CD14-positive monocyte (primary cell): ENCODE measurements at regions of chr2 and their contacts with region 1.

Region 1: GRCh38 chr2:64653349-64654062 is at the start of gene SERTAD2:
- DNase-seq: peak; percentile 84 to 89 (median 86)
- H3K4me3 ChIP-seq: peak within 1 kb of the TSS; percentile 87 to 99 (median 95)
- H3K4me3 Mint-ChIP-seq: peak within 1 kb of the TSS; percentile 89 to 93
- H3K27ac ChIP-seq: peak within 1 kb of the TSS; percentile 97 to 98
- H3K27ac Mint-ChIP-seq: peak within 1 kb of the TSS; percentile 96 to 99 (median 97)
- H3K4me1 ChIP-seq: peaks cover 52 to 74% of the 10 kb centered on the region in 2 donors
- H3K4me1 Mint-ChIP-seq: peaks cover 68% of the 10 kb centered on the region
- H3K27me3 ChIP-seq: no peaks in the 10 kb centered on the region
- H3K27me3 Mint-ChIP-seq: peaks cover 0 to 1% (median 0%) of the 10 kb centered on the region in 3 donors
- CTCF ChIP-seq: no peak
- polyA plus RNA-seq, gene SERTAD2: 8.5 to 68.7 (median 8.8) TPM

Region 2: GRCh38 chr2:64698668-64699444 is 45.4 kb after region 1 on chr2:
- intact Hi-C with region 1: loop called (anchors 5 kb)
- DNase-seq: peak; percentile 23 to 78 (median 59)
- H3K4me3 ChIP-seq: no peak overlapping the region
- H3K4me3 Mint-ChIP-seq: no peak overlapping the region
- H3K27ac ChIP-seq: peak overlapping the region in 1 of 2 donors; percentile 86
- H3K27ac Mint-ChIP-seq: peak overlapping the region; percentile 10 to 98 (median 80)
- H3K4me1 ChIP-seq: peaks cover 38 to 40% of the 10 kb centered on the region in 2 donors
- H3K4me1 Mint-ChIP-seq: peaks cover 50% of the 10 kb centered on the region
- H3K27me3 ChIP-seq: no peaks in the 10 kb centered on the region
- H3K27me3 Mint-ChIP-seq: no peaks in the 10 kb centered on the region
- CTCF ChIP-seq: no peak

Region 3: DNA sequence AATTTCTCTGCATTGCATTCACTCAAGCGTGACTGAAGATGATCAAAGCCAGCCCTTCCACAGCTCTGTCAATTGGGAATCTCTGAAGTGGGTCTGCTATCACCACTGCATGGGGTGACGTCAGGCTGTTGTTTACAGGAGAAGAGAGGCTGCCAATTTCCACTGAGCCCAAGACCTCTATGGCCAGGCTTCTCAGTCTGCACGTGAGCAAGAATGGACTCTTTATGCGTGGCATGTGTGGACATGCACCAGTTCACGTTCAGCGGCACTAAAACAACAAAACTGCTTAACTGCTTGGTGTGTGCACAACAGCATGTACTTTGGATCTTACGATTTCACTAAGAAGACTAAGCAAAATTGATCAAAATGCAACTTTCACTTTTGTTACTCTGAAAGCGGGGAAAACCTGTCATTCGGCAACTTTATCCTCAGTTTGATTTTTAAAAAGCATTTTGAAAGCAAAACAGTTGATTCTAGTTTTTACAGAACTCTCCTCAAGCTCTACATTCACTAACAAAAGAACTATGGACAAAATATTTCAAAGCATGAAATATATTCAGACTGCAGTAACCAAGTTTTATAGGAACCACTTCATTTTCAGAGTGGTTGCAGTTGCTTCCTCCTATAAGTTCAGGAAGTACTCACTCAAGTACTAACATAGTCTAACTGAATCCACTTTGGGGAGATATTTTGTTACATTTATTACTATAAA is 77.2 kb after region 1 on chr2:
- intact Hi-C with region 1: loop called in 1 of 2 experiments (anchors 5 kb)
- DNase-seq: peak; percentile 40 to 65 (median 64)
- H3K4me3 ChIP-seq: peak overlapping the region; percentile 43 to 99 (median 84)
- H3K4me3 Mint-ChIP-seq: peak overlapping the region; percentile 78 to 90
- H3K27ac ChIP-seq: peak overlapping the region; percentile 65 to 99
- H3K27ac Mint-ChIP-seq: peak overlapping the region; percentile 92 to 98 (median 95)
- H3K4me1 ChIP-seq: peaks cover 44 to 51% of the 10 kb centered on the region in 2 donors
- H3K4me1 Mint-ChIP-seq: peaks cover 49% of the 10 kb centered on the region
- H3K27me3 ChIP-seq: no peaks in the 10 kb centered on the region
- H3K27me3 Mint-ChIP-seq: no peaks in the 10 kb centered on the region
- CTCF ChIP-seq: no peak

Region 4: GRCh38 chr2:64750817-64751285 is 97.3 kb after region 1 on chr2:
- intact Hi-C with region 1: loop called in 1 of 2 experiments (anchors 2 kb)
- DNase-seq: peak; percentile 100
- H3K4me3 ChIP-seq: peak overlapping the region; percentile 85 to 98 (median 97)
- H3K4me3 Mint-ChIP-seq: peak overlapping the region; percentile 93 to 99
- H3K27ac ChIP-seq: peak overlapping the region; percentile 99 to 100
- H3K27ac Mint-ChIP-seq: peak overlapping the region; percentile 98 to 100 (median 99)
- H3K4me1 ChIP-seq: peaks cover 36 to 39% of the 10 kb centered on the region in 2 donors
- H3K4me1 Mint-ChIP-seq: peaks cover 32% of the 10 kb centered on the region
- H3K27me3 ChIP-seq: no peaks in the 10 kb centered on the region
- H3K27me3 Mint-ChIP-seq: no peaks in the 10 kb centered on the region
- CTCF ChIP-seq: no peak

Region 5: GRCh38 chr2:64859312-64860212 is 206.1 kb after region 1 on chr2:
- intact Hi-C with region 1: loop called in 1 of 2 experiments (anchors 5 kb)
- DNase-seq: peak; percentile 85 to 88 (median 86)
- H3K4me3 ChIP-seq: peak overlapping the region; percentile 44 to 69 (median 53)
- H3K4me3 Mint-ChIP-seq: peak overlapping the region; percentile 45 to 86
- H3K27ac ChIP-seq: peak overlapping the region; percentile 98 to 99
- H3K27ac Mint-ChIP-seq: peak overlapping the region in 3 of 7 donors; percentile 95 to 98 (median 95)
- H3K4me1 ChIP-seq: peaks cover 88 to 91% of the 10 kb centered on the region in 2 donors
- H3K4me1 Mint-ChIP-seq: peaks cover 36% of the 10 kb centered on the region
- H3K27me3 ChIP-seq: no peaks in the 10 kb centered on the region
- H3K27me3 Mint-ChIP-seq: peaks cover 0 to 1% (median 0%) of the 10 kb centered on the region in 3 donors
- CTCF ChIP-seq: no peak

Region 6: DNA sequence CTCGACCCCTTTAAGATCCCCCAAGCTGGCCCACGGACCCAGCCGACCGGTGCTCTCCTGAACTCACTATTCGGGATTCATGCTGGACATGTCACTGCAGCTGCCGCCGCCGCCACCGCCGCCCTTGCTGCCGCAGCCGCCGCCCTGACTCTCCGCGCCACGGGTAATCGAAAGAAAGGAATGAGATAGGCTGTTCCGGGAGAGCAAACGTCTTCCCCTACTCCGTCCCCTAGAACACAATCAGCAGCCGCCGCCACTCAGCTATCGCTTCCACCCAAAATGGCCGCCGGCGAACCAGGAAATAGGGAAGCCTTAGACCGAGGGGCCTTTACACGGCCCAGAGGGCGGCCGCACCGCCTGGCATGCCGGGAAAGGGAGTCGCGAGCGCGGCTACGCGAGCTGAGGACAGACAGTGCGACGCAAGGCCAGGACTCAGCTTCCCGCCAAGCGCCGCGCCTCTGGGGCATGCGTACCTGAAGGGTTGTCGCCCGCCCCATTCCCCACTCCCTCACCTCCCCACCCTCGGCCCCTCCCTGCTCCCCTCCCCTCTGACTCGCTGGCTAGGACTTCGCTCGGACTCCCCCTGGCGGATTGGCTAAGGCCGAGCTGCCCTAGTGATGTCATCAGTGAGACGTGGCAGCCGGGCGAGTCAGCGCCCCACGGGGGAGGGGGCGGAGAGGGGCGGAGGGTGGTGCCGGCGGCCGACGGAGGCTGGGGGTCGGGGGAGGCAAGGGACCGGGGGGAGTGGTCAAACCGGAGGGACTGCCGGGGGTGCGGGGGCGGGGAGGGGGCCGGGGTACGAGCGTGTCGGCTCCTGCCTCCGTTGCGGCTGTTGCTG is 476.5 kb after region 1 on chr2 and contains the start of gene RAB1A:
- intact Hi-C with region 1: no loop called
- DNase-seq: peak; percentile 99 to 100 (median 100)
- H3K4me3 ChIP-seq: peak within 1 kb of the TSS; percentile 96 to 99 (median 98)
- H3K4me3 Mint-ChIP-seq: peak within 1 kb of the TSS; percentile 96 to 99
- H3K27ac ChIP-seq: peak within 1 kb of the TSS; percentile 96 to 97
- H3K27ac Mint-ChIP-seq: peak within 1 kb of the TSS; percentile 97 to 100 (median 100)
- H3K4me1 ChIP-seq: peaks cover 29 to 38% of the 10 kb centered on the region in 2 donors
- H3K4me1 Mint-ChIP-seq: peaks cover 36% of the 10 kb centered on the region
- H3K27me3 ChIP-seq: no peaks in the 10 kb centered on the region
- H3K27me3 Mint-ChIP-seq: peaks cover 0 to 7% (median 0%) of the 10 kb centered on the region in 3 donors
- CTCF ChIP-seq: no peak
- polyA plus RNA-seq, gene RAB1A: 106 to 124 (median 110) TPM